ENCODE measurements at regions of chr22 and their contacts with region 1.

Region 1: GRCh38 chr22:39283322-39284004 is 36.0 kb downstream of the RPL3 start:
- DNase-seq: peak; percentile 99 to 100
- H3K4me3 ChIP-seq: peak overlapping the region; percentile 2; the same call in 1 of the 2 replicates
- H3K27ac ChIP-seq: peak overlapping the region; percentile 77
- H3K4me1 ChIP-seq: peaks cover 51% of the 10 kb centered on the region
- H3K27me3 ChIP-seq: no peaks in the 10 kb centered on the region
- CTCF ChIP-seq: no peak

Region 2: GRCh38 chr22:39205338-39206021 is 78.0 kb before region 1 on chr22:
- CTCF ChIA-PET with region 1: no interaction called
- POLR2A ChIA-PET with region 1: interaction called, 7 read pairs
- intact Hi-C with region 1: loop called (anchors 2 kb)
- DNase-seq: peak; percentile 71 to 86
- H3K4me3 ChIP-seq: no peak overlapping the region
- H3K27ac ChIP-seq: peak overlapping the region; percentile 54
- H3K4me1 ChIP-seq: peaks cover 42% of the 10 kb centered on the region
- H3K27me3 ChIP-seq: no peaks in the 10 kb centered on the region
- CTCF ChIP-seq: no peak

Region 3: DNA sequence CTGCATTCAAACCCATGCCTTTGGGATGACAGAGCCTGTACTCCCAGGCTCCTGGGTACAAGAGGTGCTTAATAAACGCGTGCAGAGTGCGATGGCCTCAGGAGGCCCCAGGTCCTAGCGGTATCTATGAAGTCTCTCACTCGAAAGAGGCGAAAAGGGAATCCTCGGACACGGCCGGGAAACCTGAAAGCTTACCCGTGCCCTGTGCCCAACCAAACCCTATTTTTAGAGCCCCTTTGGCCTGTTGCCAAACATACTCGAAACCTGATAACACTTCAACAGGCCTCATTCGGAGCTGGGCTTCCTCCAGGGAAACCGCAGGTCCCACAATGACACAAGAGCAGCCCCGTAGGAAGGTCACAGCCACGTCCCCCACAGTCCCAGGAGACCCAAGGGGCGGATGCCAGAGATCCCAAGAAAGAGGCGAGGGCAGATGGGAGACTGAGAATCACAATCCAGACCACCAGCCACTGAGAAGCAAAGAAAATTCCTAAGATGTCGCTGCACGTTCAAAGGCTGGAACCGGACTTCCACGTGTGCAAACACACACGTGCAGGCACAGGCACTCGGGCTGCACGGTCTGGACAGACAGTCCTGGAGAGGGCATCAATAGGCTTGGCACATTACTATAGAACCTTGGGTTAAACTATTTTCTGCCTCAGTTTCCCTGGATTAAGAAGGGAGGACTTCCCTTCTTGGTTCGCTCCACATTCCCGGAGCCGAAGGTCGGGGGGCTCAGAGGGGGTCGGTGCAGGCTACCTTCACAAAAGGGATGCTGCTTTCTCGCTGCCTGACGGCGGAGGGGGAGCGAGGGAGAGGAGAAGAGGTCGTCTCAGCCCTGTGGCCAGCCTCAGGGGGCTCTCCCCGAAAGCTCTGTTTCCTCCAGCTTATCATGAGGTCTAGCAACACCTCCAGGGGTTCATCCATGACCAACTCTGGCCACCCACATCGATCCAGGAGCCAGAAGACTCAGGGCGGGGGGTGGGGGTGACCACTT is 46.8 kb before region 1 on chr22:
- CTCF ChIA-PET with region 1: no interaction called
- POLR2A ChIA-PET with region 1: interaction called, 4 read pairs
- intact Hi-C with region 1: loop called (anchors 1 kb)
- DNase-seq: no peak
- H3K4me3 ChIP-seq: no peak overlapping the region
- H3K27ac ChIP-seq: no peak overlapping the region
- H3K4me1 ChIP-seq: peaks cover 49% of the 10 kb centered on the region
- H3K27me3 ChIP-seq: no peaks in the 10 kb centered on the region
- CTCF ChIP-seq: no peak

Region 4: DNA sequence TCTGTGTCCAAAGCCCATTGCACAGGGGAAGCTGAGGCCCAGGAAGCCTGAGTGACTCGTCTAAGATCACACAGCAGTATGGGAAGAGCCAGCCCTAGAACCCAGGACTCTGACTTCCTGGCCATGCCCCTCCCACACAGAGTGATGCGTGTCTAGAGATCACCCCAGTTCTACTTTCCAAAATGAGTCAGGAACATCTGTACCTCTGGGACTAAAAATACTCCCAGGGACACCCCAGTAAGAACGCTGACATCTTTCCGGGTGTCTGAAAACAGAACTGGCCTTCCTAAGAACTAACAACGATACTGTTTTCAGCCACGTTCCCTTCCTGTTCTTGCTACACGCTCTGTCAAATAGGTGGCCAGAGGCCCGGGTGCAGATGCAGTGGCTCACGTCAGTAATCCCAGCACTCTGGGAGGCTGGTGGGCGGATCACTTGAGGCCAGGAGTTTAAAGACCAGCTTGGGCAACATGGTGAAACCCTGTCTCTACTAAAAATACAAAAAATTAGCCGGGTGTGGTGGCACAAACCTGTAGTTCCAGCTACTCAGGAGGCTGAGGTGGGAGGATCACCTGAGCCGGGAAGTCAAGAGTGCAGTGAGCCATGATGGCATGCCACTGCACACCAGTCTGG is 16.9 kb before region 1 on chr22:
- CTCF ChIA-PET with region 1: interaction called, 21 read pairs
- POLR2A ChIA-PET with region 1: interaction called, 4 read pairs
- intact Hi-C with region 1: loop called (anchors 1 kb)
- DNase-seq: peak; percentile 56 to 87
- H3K4me3 ChIP-seq: no peak overlapping the region
- H3K27ac ChIP-seq: peak overlapping the region; percentile 65
- H3K4me1 ChIP-seq: peaks cover 22% of the 10 kb centered on the region
- H3K27me3 ChIP-seq: no peaks in the 10 kb centered on the region
- CTCF ChIP-seq: no peak

Region 5: DNA sequence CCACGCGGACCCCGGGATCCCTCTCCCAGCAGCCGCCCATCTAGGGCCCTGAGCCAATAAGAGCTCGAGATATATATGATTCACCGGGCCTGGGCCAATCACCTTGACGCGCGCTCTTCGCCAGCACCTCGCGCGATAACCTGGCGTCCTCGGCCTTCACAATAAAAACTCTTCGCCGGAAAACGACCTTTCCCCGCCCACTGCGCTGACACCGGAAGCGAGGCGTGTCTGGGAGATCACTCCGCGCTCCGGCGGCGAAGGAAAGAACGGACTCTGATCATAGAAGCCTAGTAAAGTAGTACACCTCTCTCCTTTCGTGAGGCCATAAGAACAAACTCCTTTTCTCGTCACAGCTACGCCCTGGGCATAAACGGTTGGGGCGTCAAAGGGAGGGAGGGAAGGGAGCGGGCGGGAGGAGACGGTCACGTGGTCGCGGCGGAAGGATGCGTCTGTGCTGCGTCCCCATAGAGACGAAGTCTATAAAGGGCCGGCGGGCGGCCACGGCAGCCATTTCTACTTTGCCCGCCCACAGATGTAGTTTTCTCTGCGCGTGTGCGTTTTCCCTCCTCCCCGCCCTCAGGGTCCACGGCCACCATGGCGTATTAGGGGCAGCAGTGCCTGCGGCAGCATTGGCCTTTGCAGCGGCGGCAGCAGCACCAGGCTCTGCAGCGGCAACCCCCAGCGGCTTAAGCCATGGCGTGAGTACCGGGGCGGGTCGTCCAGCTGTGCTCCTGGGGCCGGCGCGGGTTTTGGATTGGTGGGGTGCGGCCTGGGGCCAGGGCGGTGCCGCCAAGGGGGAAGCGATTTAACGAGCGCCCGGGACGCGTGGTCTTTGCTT is 236.8 kb after region 1 on chr22 and contains the start of gene ATF4:
- CTCF ChIA-PET with region 1: no interaction called
- POLR2A ChIA-PET with region 1: interaction called, 11 read pairs
- intact Hi-C with region 1: no loop called
- DNase-seq: peak; percentile 98
- H3K4me3 ChIP-seq: peak within 1 kb of the TSS; percentile 97
- H3K27ac ChIP-seq: peak within 1 kb of the TSS; percentile 93
- H3K4me1 ChIP-seq: peaks cover 31% of the 10 kb centered on the region
- H3K27me3 ChIP-seq: no peaks in the 10 kb centered on the region
- CTCF ChIP-seq: no peak
- total RNA-seq, gene ATF4: 488 and 588 TPM in 2 replicates